ENCODE measurements at regions of chr2 and their contacts with region 1.

Region 1: DNA sequence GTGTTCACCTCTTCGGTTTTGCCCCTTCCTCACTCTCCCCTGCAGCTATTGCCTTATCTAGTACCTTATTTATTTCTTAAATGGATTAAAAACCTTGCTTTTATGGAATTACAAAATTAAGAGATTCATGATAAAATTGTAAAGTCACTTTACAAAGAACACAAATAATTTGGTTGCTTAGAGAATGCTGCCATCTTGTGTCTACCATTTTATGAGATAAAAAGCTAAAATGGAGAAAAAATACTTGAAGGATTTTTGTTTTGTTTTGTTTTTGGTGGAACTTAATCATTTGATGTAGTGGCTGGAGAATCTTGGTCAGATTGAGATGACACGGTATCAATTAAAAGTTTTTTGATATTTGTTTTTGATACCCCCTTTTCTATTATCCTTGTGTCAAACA is 69.6 kb downstream of the R3HDM1 start:
- DNase-seq: peak in 1 of 2 experiments; percentile 12
- ATAC-seq: no peak
- H3K4me3 ChIP-seq: no peak overlapping the region
- H3K27ac ChIP-seq: no peak overlapping the region
- H3K4me1 ChIP-seq: no peaks in the 10 kb centered on the region
- CTCF ChIP-seq: peak; percentile 30; the same call in 2 of the 3 replicates
- EP300 ChIP-seq: no peak
- POLR2A ChIP-seq: no peak
- RAD21 ChIP-seq: peak; percentile 43 to 48; a peak in 4 of 5 replicates

Region 2: DNA sequence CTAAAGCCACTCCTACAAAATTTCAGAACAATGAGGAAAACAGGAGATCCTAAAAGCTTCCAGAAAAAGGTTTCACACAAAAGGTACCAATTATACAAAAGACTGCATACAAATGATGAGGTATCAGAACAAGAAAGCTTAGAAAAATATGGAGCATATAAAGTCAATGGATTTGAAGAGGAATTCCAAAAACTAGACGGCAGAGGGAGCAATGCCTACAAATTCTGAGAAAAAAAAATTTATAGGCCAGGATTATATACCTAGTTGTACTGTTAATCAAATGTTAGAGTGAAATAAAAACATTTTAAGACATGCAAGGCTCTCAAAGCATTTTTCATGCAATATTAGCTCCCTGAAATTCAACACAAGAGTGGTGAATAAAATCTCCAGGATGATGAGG is 176.1 kb before region 1 on chr2:
- CTCF ChIA-PET with region 1: no interaction called
- POLR2A ChIA-PET with region 1: no interaction called
- DNase-seq: no peak
- ATAC-seq: no peak
- H3K4me3 ChIP-seq: no peak overlapping the region
- H3K27ac ChIP-seq: no peak overlapping the region
- H3K4me1 ChIP-seq: no peaks in the 10 kb centered on the region
- CTCF ChIP-seq: no peak
- EP300 ChIP-seq: no peak
- POLR2A ChIP-seq: no peak
- RAD21 ChIP-seq: no peak

Region 3: DNA sequence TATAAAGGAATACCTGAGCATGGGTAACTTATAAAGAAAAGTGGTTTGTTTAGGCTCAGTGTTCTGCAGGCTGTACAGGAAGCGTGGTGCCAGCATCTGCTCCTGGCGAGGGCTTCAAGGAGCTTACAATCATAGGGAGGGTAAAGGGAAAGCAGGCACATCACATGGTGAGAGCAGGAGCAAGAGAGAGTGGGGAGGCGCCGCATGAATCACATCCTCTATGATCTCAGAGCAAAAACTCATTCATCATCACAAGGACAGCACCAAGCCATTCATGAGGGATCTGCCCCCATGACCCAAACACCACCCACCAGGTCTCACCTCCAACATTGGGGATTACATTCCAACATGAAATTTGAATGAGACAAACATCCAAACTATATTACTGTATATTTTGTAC is 37.1 kb before region 1 on chr2:
- CTCF ChIA-PET with region 1: no interaction called
- POLR2A ChIA-PET with region 1: no interaction called
- DNase-seq: peak in 1 of 2 experiments; percentile 27
- ATAC-seq: peak in 1 of 2 experiments; percentile 64; a peak in 3 of 6 replicates
- H3K4me3 ChIP-seq: no peak overlapping the region
- H3K27ac ChIP-seq: no peak overlapping the region
- H3K4me1 ChIP-seq: peaks cover 13% of the 10 kb centered on the region
- CTCF ChIP-seq: no peak
- EP300 ChIP-seq: no peak
- POLR2A ChIP-seq: no peak
- RAD21 ChIP-seq: no peak

Region 4: GRCh38 chr2:135590619-135591260 is 10.2 kb before region 1 on chr2:
- CTCF ChIA-PET with region 1: interaction called, 12 read pairs
- POLR2A ChIA-PET with region 1: no interaction called
- DNase-seq: no peak
- ATAC-seq: no peak
- H3K4me3 ChIP-seq: no peak overlapping the region
- H3K27ac ChIP-seq: no peak overlapping the region
- H3K4me1 ChIP-seq: no peaks in the 10 kb centered on the region
- CTCF ChIP-seq: no peak
- EP300 ChIP-seq: no peak
- POLR2A ChIP-seq: no peak
- RAD21 ChIP-seq: no peak